Activated CD4-positive, alpha-beta T cell treated with anti-CD3 and anti-CD28 coated beads for 36 hours (primary cell): ENCODE measurements at regions of chr9 and their contacts with region 1.

Region 1: GRCh38 chr9:133701862-133702797 is 36.0 kb downstream of the SARDH start:
- DNase-seq: peak; percentile 88
- ATAC-seq: peak; percentile 87
- H3K4me3 Mint-ChIP-seq: peak overlapping the region; percentile 81
- H3K27ac Mint-ChIP-seq: peak overlapping the region; percentile 97
- H3K4me1 Mint-ChIP-seq: peaks cover 53% of the 10 kb centered on the region
- H3K27me3 Mint-ChIP-seq: no peaks in the 10 kb centered on the region

Region 2: DNA sequence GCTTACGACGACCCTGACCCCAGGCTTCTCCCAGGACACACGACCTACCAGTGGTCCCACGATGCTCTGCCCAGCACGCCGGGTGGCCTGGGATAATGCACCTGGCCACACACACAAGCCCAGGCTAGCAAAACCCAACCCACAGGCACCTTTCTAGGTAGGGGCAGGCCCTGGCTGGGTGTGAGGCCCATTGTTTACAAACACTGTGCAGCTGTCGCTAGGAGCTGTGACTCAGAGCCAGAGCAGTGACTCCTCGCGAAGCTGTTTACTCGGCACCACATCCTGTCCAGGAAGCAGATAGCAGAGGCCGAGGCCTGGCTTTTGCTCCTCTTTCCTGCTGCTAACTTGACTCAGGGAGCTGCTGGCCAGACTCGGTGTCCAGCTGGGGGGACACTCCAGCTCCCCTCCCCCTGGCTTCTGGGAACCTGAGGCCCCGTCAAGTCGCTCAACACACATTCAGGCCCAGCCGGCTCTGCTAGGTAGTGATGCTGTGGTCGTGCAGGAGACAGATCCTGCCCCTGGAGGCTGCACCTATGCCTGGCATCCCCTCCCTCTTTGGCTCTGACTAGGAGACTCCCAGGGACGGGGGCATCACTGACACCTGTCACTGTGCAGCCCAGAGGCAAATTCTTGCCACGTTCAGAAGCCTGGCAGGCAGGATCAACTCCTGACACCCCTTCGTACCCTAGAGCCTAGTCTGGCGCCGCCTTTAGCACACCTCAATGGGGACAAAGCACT is 568.3 kb before region 1 on chr9:
- CTCF ChIA-PET with region 1: no interaction called
- POLR2A ChIA-PET with region 1: no interaction called
- intact Hi-C with region 1: loop called in 1 of 2 experiments (anchors 10 kb)
- DNase-seq: peak; percentile 95
- ATAC-seq: peak; percentile 84
- H3K4me3 Mint-ChIP-seq: peak overlapping the region; percentile 41
- H3K27ac Mint-ChIP-seq: peak overlapping the region; percentile 98
- H3K4me1 Mint-ChIP-seq: peaks cover 75% of the 10 kb centered on the region
- H3K27me3 Mint-ChIP-seq: no peaks in the 10 kb centered on the region

Region 3: GRCh38 chr9:133658442-133659431 is 43.4 kb before region 1 on chr9:
- CTCF ChIA-PET with region 1: no interaction called
- POLR2A ChIA-PET with region 1: no interaction called
- intact Hi-C with region 1: loop called (anchors 5 to 10 kb)
- DNase-seq: peak; percentile 53
- ATAC-seq: peak; percentile 57
- H3K4me3 Mint-ChIP-seq: peak overlapping the region; percentile 26
- H3K27ac Mint-ChIP-seq: no peak overlapping the region
- H3K4me1 Mint-ChIP-seq: peaks cover 33% of the 10 kb centered on the region
- H3K27me3 Mint-ChIP-seq: peaks cover 9% of the 10 kb centered on the region

Region 4: GRCh38 chr9:133677126-133678010 is 24.8 kb before region 1 on chr9:
- CTCF ChIA-PET with region 1: no interaction called
- POLR2A ChIA-PET with region 1: interaction called, 5 read pairs
- intact Hi-C with region 1: loop called in 1 of 2 experiments (anchors 2 kb)
- DNase-seq: peak; percentile 78
- ATAC-seq: peak; percentile 100
- H3K4me3 Mint-ChIP-seq: no peak overlapping the region
- H3K27ac Mint-ChIP-seq: peak overlapping the region; percentile 37
- H3K4me1 Mint-ChIP-seq: peaks cover 45% of the 10 kb centered on the region
- H3K27me3 Mint-ChIP-seq: no peaks in the 10 kb centered on the region

Region 5: GRCh38 chr9:133683586-133684120 is 18.5 kb before region 1 on chr9:
- CTCF ChIA-PET with region 1: interaction called, 12 read pairs
- POLR2A ChIA-PET with region 1: interaction called, 4 read pairs
- intact Hi-C with region 1: loop called in 1 of 2 experiments (anchors 1 kb)
- DNase-seq: peak; percentile 78
- ATAC-seq: peak; percentile 89
- H3K4me3 Mint-ChIP-seq: peak overlapping the region; percentile 40
- H3K27ac Mint-ChIP-seq: peak overlapping the region; percentile 94
- H3K4me1 Mint-ChIP-seq: peaks cover 29% of the 10 kb centered on the region
- H3K27me3 Mint-ChIP-seq: no peaks in the 10 kb centered on the region